Ascending aorta (tissue), 2 donors: ENCODE measurements at regions of chr3 and their contacts with region 1.

Region 1: DNA sequence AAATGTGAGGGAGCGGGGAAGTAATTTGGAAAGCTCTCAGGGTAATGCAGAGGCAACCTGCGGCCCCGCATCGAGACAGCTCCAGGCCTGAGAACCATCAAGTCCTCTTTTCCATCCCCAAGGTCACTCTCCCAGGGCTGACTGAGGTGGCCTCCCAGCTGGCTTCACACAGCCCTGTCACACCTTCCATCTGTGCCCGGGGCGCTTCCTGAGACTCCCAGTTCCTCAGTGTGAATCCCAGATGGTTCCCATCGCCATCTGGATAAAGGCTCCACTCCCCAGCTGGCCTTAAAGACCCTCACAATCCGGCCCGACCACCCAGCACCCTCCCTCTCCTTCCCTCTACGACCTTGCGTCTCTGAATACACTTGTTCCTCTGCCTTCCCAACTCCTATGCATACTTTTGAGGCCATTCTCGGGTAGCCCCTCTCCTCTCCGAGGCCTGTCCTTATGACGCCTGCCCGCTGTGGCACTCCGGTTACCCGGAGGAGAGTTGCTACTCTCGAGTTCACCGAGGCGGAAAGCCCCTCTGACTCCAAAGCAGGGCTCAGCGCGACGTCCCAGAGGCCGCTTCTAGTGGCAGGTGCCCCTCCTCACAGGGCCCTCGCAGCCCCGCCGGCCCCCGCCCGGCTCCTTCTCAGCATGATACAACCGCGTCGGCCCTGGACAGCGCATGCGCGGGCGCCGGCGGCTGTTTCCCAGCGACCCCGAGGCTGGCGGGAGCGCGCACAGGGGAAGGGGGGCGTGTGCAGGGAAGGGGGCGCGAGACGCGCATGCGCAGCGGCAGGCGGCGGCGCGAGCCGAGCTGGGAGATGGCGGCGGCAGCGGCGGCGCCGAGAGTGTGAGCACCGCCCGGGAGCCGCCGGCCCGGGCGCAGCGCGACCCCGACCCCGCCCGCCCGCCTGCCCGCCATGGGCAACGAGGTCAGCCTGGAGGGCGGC is at the start of gene BSN:
- DNase-seq: peak; percentile 46 to 94
- H3K4me3 ChIP-seq: peak within 1 kb of the TSS; percentile 70 to 75
- H3K27ac ChIP-seq: peak within 1 kb of the TSS; percentile 71 to 72
- H3K4me1 ChIP-seq: peaks cover 3 to 13% of the 10 kb centered on the region in 2 donors
- H3K27me3 ChIP-seq: no peaks in the 10 kb centered on the region
- CTCF ChIP-seq: no peak
- total RNA-seq, gene BSN: 0.85 TPM

Region 2: DNA sequence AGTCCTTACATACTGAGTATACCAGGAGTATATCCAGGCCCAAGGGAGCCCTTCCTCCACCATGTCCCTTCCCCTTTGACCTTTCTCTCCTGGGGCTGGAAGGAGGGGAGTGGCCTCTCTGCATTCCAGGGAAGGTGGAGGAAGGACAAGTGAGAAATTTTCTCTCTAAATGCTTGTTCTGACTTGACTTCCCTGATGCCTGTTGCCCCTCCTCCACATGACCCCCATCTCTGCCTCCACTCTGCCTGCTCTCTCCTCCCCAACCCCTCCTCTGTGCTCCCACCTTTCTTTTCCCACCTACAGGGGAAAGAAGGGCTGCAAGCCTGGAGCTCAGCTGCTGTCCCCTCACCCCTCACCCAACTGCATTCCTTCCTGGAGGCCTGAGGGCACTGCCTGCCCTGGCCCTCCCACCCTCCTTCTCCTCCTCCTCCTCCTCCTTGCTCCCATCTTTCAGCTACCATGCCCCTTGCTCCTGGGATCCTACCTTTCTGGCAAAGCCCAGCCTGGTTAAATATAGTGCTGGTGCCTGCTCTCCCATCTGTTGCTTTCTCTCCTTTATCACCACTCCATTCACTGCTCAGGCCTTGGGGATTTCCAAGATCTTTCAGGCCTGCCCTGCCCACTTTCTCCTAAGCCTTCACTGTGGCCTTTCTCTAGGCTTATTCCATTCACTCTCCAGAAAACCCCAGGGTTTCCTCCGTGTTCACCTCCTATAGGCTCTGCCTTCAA is 92.4 kb before region 1 on chr3:
- intact Hi-C with region 1: no loop called
- DNase-seq: no peak
- H3K4me3 ChIP-seq: no peak overlapping the region
- H3K27ac ChIP-seq: peak overlapping the region in 1 of 2 donors; percentile 18
- H3K4me1 ChIP-seq: no peaks in the 10 kb centered on the region
- H3K27me3 ChIP-seq: no peaks in the 10 kb centered on the region
- CTCF ChIP-seq: no peak

Region 3: GRCh38 chr3:49539659-49540560 is 14.1 kb before region 1 on chr3:
- intact Hi-C with region 1: loop called (anchors 1 kb)
- DNase-seq: peak; percentile 67 to 95
- H3K4me3 ChIP-seq: peak overlapping the region; percentile 37 to 66
- H3K27ac ChIP-seq: peak overlapping the region; percentile 67 to 87
- H3K4me1 ChIP-seq: no peaks in the 10 kb centered on the region
- H3K27me3 ChIP-seq: no peaks in the 10 kb centered on the region
- CTCF ChIP-seq: peak; percentile 88 to 94 (median 94)